ENCODE measurements at regions of chr1 and their contacts with region 1.

Region 1: DNA sequence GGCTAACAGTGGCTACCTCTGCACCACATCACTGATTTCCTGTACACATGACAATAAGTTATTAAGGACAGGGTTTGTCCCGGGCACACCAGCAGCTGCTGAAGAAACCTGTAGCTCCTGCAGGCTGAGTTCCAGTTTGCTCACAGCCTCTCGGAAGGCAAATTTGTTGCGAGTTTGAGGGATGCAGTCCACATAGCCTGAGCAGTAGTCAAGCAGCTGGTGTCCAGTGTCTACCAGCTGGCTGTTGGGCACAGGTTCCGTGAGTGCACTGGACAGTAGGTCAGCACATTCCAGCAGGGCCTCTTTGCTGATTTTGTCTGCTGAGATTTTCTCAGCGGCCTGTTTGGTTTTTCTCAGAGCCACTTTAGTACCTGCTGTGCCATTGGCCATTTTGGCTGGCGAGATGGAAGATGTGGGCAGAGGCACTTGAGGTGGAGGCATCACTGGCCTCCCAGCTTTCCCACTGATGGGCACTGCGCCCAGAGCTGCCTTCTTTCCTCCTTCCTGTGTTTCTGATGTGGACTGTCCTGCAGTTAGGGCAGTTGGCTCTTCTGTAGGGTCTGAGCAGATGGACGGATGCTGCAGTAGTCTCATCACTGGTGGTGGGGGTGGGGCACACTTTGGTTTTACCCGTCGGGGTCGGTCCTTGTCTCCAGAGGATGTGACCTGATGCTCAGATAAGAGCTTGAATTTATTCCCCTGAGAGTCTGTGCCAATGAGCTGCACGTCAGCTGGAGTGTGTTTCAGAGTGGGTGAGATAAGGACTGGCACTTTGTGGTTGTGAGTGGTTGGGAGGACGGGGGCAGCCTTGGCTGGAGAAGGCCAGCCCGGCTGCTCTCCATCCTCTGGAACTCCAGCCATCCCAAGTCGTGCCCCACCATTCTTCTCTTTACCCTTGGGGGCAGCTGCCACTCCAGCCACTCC is 26.1 kb downstream of the TOR3A start:
- DNase-seq: no peak
- ATAC-seq: no peak
- H3K4me3 ChIP-seq: no peak overlapping the region
- H3K4me3 Mint-ChIP-seq: no peak overlapping the region
- H3K27ac ChIP-seq: no peak overlapping the region
- H3K27ac Mint-ChIP-seq: no peak overlapping the region
- H3K4me1 ChIP-seq: no peaks in the 10 kb centered on the region
- H3K4me1 Mint-ChIP-seq: no peaks in the 10 kb centered on the region
- H3K27me3 ChIP-seq: no peaks in the 10 kb centered on the region
- H3K27me3 Mint-ChIP-seq: no peaks in the 10 kb centered on the region
- CTCF ChIP-seq: no peak

Region 2: DNA sequence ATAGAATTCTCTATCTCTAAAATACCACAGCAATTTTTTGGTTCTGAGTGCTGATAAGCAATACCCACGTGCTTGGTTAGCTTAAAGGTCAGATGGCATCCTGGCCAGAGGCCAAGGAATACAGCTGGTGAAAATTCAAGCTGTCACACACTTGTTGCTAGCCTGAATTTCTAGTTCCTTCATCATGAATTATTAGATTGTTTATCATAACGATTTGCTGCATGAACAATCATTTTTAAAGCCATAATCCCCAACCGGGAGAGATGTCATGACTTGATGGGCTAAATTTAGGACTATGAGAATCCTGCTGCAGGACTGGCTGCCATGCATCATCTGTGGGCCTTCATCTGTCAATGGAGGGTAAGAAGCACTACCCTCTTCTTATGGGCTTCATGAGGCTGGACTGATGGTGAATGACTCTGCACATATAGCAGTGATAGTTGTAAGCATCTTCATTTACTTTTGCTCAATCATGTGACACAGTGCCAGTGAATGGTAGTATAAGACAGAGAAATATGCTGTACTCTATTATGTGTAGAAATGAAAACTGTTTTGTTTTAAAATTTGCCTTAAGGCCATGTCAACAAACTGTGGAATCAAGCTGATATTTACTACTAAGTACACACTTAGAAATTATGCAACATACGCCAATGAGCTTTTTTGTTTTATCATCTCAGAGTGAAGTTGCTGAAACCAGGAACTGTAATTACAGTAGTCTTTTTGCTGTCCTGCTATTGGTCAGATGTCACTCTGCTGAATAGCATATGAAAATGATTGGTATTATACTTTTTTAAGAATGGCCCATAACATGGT is 463.5 kb before region 1 on chr1:
- CTCF ChIA-PET with region 1: no interaction called
- POLR2A ChIA-PET with region 1: no interaction called
- intact Hi-C with region 1: no loop called
- DNase-seq: no peak
- ATAC-seq: peak; percentile 21
- H3K4me3 ChIP-seq: no peak overlapping the region
- H3K4me3 Mint-ChIP-seq: no peak overlapping the region
- H3K27ac ChIP-seq: no peak overlapping the region
- H3K27ac Mint-ChIP-seq: no peak overlapping the region
- H3K4me1 ChIP-seq: peaks cover 33 to 36% of the 10 kb centered on the region in 2 donors
- H3K4me1 Mint-ChIP-seq: peaks cover 69% of the 10 kb centered on the region
- H3K27me3 ChIP-seq: no peaks in the 10 kb centered on the region
- H3K27me3 Mint-ChIP-seq: no peaks in the 10 kb centered on the region
- CTCF ChIP-seq: no peak

Region 3: DNA sequence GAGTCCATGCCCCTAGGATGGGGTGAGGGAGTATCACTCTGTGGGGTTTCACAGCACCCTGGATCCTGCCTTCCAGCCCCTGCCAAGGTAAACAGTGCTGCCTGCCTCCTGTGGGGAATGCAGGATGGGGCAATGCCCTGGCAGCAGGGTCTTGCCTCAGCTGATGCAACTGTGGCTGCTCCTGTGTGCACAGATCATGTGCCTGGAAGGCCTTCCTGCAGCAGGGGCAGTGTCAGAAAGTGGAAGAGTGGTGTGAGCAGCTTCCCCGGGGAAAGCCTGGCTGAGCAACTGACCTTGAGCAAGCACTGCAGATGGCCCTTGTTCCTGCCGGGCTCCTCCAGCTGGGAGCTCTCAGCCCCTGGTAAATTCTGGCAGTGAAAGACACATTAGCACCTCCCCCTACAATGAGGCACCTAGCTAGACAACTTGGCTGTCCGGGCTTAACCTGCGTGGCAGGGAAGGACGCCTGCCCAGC is 16.2 kb before region 1 on chr1:
- CTCF ChIA-PET with region 1: interaction called, 3 read pairs
- POLR2A ChIA-PET with region 1: interaction called, 12 read pairs
- intact Hi-C with region 1: no loop called
- DNase-seq: peak; percentile 10
- ATAC-seq: no peak
- H3K4me3 ChIP-seq: no peak overlapping the region
- H3K4me3 Mint-ChIP-seq: no peak overlapping the region
- H3K27ac ChIP-seq: peak overlapping the region in 1 of 2 donors; percentile 4
- H3K27ac Mint-ChIP-seq: peak overlapping the region; percentile 73
- H3K4me1 ChIP-seq: peaks cover 26 to 34% of the 10 kb centered on the region in 2 donors
- H3K4me1 Mint-ChIP-seq: peaks cover 37% of the 10 kb centered on the region
- H3K27me3 ChIP-seq: no peaks in the 10 kb centered on the region
- H3K27me3 Mint-ChIP-seq: no peaks in the 10 kb centered on the region
- CTCF ChIP-seq: no peak

Region 4: GRCh38 chr1:179142889-179143299 is 34.9 kb after region 1 on chr1:
- CTCF ChIA-PET with region 1: no interaction called
- POLR2A ChIA-PET with region 1: no interaction called
- intact Hi-C with region 1: no loop called
- DNase-seq: peak; percentile 19
- ATAC-seq: peak; percentile 43
- H3K4me3 ChIP-seq: no peak overlapping the region
- H3K4me3 Mint-ChIP-seq: peak overlapping the region; percentile 0
- H3K27ac ChIP-seq: peak overlapping the region; percentile 4 to 30
- H3K27ac Mint-ChIP-seq: peak overlapping the region; percentile 11
- H3K4me1 ChIP-seq: peaks cover 12 to 16% of the 10 kb centered on the region in 2 donors
- H3K4me1 Mint-ChIP-seq: peaks cover 16% of the 10 kb centered on the region
- H3K27me3 ChIP-seq: no peaks in the 10 kb centered on the region
- H3K27me3 Mint-ChIP-seq: no peaks in the 10 kb centered on the region
- CTCF ChIP-seq: no peak

Region 5: DNA sequence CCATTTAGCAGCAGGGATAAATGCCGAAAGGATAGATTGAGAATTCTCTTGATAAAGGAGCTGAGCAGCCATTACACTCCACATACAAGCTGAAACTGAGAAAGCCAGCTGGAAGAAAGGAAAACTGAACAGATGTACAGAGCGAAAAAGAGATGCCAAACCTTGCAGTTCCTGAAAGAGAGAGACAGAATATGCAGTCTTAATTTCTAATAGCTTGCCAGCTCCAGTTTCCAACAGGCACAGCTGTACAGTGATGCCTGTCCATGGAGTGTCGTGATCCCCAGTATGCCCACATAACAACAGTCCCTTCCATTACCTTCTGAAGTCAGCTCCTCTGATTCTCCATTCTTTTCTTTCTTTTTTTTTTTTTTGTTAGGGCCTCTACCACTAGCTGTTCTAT is 98.8 kb after region 1 on chr1:
- CTCF ChIA-PET with region 1: no interaction called
- POLR2A ChIA-PET with region 1: no interaction called
- intact Hi-C with region 1: no loop called
- DNase-seq: no peak
- ATAC-seq: no peak
- H3K4me3 ChIP-seq: no peak overlapping the region
- H3K4me3 Mint-ChIP-seq: no peak overlapping the region
- H3K27ac ChIP-seq: no peak overlapping the region
- H3K27ac Mint-ChIP-seq: no peak overlapping the region
- H3K4me1 ChIP-seq: no peaks in the 10 kb centered on the region
- H3K4me1 Mint-ChIP-seq: peaks cover 19% of the 10 kb centered on the region
- H3K27me3 ChIP-seq: no peaks in the 10 kb centered on the region
- H3K27me3 Mint-ChIP-seq: no peaks in the 10 kb centered on the region
- CTCF ChIP-seq: no peak